ENCODE measurements at regions of chr4 and their contacts with region 1.

Region 1: GRCh38 chr4:76179398-76180318 is 31.5 kb upstream of the NUP54 start:
- DNase-seq: peak; percentile 83 to 93 (median 89)
- H3K4me3 ChIP-seq: no peak overlapping the region
- H3K27ac ChIP-seq: no peak overlapping the region
- H3K4me1 ChIP-seq: peaks cover 0 to 3% (median 0%) of the 10 kb centered on the region in 4 experiments
- H3K27me3 ChIP-seq: no peaks in the 10 kb centered on the region

Region 2: GRCh38 chr4:75790024-75790423 is 389.6 kb before region 1 on chr4:
- CTCF ChIA-PET with region 1: no interaction called
- POLR2A ChIA-PET with region 1: no interaction called
- DNase-seq: no peak
- H3K4me3 ChIP-seq: no peak overlapping the region
- H3K27ac ChIP-seq: no peak overlapping the region
- H3K4me1 ChIP-seq: no peaks in the 10 kb centered on the region
- H3K27me3 ChIP-seq: no peaks in the 10 kb centered on the region

Region 3: GRCh38 chr4:75916091-75916661 is 263.5 kb before region 1 on chr4:
- CTCF ChIA-PET with region 1: no interaction called
- POLR2A ChIA-PET with region 1: no interaction called
- DNase-seq: peak; percentile 42 to 69 (median 60)
- H3K4me3 ChIP-seq: no peak overlapping the region
- H3K27ac ChIP-seq: no peak overlapping the region
- H3K4me1 ChIP-seq: no peaks in the 10 kb centered on the region
- H3K27me3 ChIP-seq: no peaks in the 10 kb centered on the region

Region 4: GRCh38 chr4:76153356-76153755 is 26.3 kb before region 1 on chr4:
- CTCF ChIA-PET with region 1: interaction called, 16 read pairs
- POLR2A ChIA-PET with region 1: no interaction called
- DNase-seq: no peak
- H3K4me3 ChIP-seq: no peak overlapping the region
- H3K27ac ChIP-seq: no peak overlapping the region
- H3K4me1 ChIP-seq: peaks cover 0 to 14% (median 12%) of the 10 kb centered on the region in 4 experiments
- H3K27me3 ChIP-seq: no peaks in the 10 kb centered on the region

Region 5: GRCh38 chr4:76208005-76208765 is 28.5 kb after region 1 on chr4:
- CTCF ChIA-PET with region 1: interaction called, 18 read pairs
- POLR2A ChIA-PET with region 1: no interaction called
- DNase-seq: peak in 2 of 3 donors; percentile 55 to 62
- H3K4me3 ChIP-seq: peak overlapping the region in 6 of 7 experiments; percentile 40 to 73 (median 54)
- H3K27ac ChIP-seq: peak overlapping the region in 1 of 2 experiments; percentile 67
- H3K4me1 ChIP-seq: peaks cover 21 to 56% (median 46%) of the 10 kb centered on the region in 4 experiments
- H3K27me3 ChIP-seq: no peaks in the 10 kb centered on the region

Region 6: DNA sequence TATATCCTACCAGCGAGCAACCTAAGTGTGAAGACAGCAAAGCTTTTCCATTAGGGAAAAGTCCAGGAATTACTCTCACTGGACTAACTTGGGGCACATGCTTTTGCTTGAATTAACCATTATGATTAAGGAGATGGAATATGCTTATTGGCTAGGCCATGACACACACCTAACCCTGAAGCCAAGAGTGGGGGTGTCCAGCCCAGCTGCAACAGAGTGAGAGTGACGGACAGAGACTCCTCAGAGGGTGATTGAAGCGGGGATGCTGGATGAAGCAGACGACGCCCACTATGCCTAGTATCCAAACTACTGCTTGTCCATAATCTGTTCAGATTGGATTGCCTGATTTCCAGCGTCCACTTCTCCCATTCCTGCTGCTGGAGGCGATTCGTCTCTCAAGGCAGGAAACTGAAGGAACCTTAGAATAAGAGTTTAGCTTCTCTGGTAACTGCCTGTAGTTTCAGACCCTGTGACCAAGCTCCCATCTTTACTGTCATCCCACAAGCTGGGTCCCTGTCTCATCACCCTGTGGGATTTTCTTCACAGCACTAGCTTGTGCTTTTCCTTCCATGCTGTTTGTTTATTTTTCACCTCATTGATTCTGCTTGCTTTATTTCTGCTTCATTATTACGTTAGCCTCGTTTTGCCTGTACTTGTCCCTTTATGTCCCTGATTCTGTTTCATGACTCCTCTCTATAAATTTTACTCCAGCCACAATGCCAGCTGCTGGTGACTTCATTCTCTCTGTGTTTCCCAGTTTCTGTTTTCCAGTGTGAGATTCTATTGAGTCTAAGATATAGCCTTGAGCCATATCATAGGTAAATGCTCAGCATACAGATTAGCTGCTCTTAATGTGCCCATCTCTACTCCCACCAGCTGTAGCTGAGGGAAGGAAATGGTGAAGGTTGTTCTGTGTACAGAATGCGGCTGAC is 90.9 kb after region 1 on chr4:
- CTCF ChIA-PET with region 1: interaction called, 13 read pairs
- POLR2A ChIA-PET with region 1: no interaction called
- DNase-seq: no peak
- H3K4me3 ChIP-seq: no peak overlapping the region
- H3K27ac ChIP-seq: no peak overlapping the region
- H3K4me1 ChIP-seq: peaks cover 0 to 9% (median 0%) of the 10 kb centered on the region in 4 experiments
- H3K27me3 ChIP-seq: no peaks in the 10 kb centered on the region

Region 7: DNA sequence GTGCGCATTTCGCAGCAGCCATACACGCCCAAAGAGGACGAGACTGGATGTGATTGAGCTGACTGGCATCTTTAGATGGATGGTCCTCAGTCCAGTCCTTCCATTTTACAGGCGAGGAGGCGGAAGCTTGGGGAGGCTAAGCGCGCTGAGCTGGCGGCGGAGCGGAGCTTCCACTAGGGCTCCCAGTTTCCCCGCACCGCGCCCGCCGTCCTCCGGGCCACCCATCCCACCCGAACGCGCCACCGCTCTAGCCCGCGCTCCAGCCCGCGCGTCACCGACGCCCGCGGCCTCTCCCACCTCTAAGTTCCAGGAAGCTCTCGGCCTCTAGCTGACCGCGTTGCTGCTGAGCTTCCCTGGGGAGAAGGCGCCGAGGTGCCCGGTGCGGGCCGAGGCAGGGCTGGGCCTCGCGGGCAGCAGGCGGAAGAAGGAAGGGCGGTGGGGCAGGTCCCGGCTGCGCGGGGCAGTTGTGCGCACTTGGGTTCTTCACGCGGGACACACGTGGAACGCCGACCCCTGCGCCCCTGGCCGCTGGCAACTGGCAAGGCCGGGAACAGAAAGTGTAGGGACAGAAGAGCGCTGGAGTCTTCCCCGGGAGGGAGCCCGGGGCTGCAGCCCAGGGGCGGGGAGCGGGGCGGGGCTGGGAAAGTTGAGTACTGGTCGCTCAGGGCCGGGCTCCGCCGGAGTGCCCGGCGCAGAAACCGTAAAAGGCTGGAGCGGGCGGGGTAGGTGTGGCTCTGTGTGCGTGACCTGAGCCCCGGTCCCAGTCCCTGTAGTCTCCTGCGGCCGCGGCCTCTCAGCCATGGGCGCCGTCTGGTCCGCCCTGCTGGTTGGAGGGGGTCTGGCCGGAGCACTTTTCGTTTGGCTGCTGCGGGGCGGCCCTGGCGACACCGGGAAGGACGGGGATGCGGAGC is 126.6 kb after region 1 on chr4 and contains the start of gene STBD1:
- CTCF ChIA-PET with region 1: interaction called, 32 read pairs
- POLR2A ChIA-PET with region 1: no interaction called
- DNase-seq: peak; percentile 39 to 74 (median 58)
- H3K4me3 ChIP-seq: peak within 1 kb of the TSS; percentile 74 to 91 (median 84)
- H3K27ac ChIP-seq: peak within 1 kb of the TSS in 1 of 2 experiments; percentile 49
- H3K4me1 ChIP-seq: peaks cover 18 to 53% (median 41%) of the 10 kb centered on the region in 4 experiments
- H3K27me3 ChIP-seq: no peaks in the 10 kb centered on the region

Region 8: DNA sequence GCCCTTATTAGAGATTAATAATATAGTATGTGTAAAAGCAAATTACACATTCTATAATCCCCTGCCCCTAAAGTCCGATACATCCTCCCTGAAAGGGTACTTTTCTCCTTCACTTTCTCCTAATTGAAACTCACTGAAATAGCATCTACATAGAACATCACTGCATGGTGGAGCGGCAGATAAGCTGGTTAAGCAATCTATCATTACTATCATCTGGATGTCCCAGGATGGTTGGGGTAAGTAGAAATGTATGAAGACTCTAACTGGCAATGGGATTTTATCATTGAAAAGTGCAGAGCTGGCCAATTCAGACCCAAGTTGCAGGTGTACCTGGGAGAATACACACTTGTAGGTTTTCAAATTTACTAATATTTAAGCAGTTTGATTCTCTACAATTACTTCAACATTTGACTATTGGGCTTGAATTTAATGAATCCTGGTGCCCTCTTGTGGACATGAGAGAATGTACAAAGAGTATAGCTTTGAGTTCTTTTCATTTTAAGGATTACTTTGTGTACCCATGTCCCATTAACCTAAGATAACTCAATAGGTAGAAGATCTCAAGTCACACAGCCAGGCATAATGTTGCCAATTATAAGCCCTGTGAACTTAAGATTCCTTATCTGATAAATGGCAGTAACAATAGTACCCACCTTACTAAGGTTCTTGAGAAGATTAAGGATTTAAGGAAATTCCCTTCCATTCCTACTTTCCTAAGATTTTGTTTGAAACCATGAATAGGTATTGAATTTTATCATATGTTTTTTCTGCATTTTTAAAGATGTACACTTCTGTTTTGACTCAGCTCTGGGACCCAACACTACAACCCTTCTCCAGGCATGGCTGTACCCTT is 325.2 kb after region 1 on chr4:
- CTCF ChIA-PET with region 1: interaction called, 43 read pairs
- POLR2A ChIA-PET with region 1: no interaction called
- DNase-seq: peak; percentile 55 to 79 (median 73)
- H3K4me3 ChIP-seq: no peak overlapping the region
- H3K27ac ChIP-seq: no peak overlapping the region
- H3K4me1 ChIP-seq: no peaks in the 10 kb centered on the region
- H3K27me3 ChIP-seq: peaks cover 0 to 3% (median 0%) of the 10 kb centered on the region in 5 experiments

Measured in common myeloid progenitor, CD34-positive (primary cell).